Spleen (tissue), 13 donors: ENCODE measurements at regions of chr20 and their contacts with region 1.

Region 1: DNA sequence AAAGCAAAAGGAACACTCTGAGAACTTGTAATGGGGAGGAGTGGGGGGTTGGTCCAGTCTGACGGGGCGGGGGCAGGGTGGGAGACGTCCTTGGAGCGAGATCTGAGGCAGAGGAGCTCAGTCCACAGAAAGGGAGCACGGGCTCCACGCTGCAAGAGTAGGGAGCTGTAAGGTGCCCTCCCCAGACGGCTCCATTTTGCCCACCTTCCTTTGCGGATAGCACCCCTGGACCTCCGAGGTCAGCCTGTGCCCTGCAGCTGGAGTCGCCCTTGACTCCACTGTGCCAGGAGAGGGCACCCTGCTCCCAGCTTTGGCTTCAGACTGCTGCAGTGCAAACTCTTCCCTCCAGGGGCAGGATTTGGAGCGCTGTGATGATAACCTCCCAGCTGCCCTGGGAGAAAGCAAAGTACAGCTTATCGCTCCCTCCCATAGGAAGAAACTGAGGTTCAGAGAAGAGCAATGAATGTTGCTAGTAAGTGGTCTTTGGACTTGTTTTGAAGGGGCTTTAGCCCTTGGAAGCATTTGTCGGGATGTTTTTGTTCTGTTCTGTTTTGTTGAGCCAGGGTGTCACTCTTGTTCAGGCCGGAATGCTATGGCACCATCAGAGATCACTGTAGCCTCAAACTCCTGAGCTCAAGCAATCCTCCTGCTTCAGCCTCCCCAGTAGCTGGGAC is 9.5 kb upstream of the AHCY start:
- DNase-seq: peak; percentile 95
- H3K4me3 ChIP-seq: peak overlapping the region in 4 of 8 donors; percentile 7 to 54 (median 14)
- H3K27ac ChIP-seq: no peak overlapping the region
- H3K4me1 ChIP-seq: peaks cover 9 to 22% (median 19%) of the 10 kb centered on the region in 6 donors
- H3K27me3 ChIP-seq: peaks cover 0 to 22% (median 14%) of the 10 kb centered on the region in 7 donors
- CTCF ChIP-seq: peak; percentile 98 to 100 (median 99)
- POLR2A ChIP-seq: no peak

Region 2: DNA sequence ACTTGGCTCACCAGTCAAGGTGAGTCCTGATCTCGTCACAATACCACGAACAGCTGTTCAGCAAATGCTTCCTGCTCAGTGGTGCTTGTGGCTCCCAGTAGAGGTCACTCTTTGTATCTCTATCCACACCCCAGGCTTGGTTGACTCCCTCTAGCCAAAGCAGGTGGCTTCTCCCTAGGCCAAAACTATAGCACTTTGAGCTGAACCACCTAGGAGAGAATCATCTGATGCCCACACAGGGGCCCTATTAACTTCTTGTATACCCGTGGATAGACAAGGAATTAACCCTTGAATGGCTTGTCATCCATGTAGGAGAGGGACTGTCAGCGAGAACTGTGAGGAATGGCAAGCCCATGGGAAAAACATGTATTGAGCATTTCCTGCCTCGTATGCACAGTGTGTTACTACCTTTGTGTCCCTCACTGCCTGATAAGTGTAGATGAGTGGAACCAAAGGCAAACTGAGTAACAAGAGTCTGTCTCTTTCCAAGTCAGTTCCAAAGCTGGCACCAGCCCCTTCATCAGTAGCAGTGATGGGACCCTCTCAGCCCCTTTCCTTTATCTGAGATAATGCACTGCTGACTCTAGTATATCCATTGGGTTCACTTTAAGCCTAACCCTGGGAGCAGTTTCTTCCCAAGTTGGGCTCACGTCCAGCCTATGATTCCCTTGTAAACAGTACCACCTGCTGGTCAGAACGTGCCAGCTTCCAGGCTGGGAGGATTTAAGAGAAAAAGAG is 243.2 kb before region 1 on chr20:
- intact Hi-C with region 1: no loop called
- DNase-seq: no peak
- H3K4me3 ChIP-seq: no peak overlapping the region
- H3K27ac ChIP-seq: peak overlapping the region in 3 of 8 donors; percentile 5 to 19 (median 8)
- H3K4me1 ChIP-seq: peaks cover 6 to 38% (median 16%) of the 10 kb centered on the region in 6 donors
- H3K27me3 ChIP-seq: no peaks in the 10 kb centered on the region
- CTCF ChIP-seq: peak; percentile 67 to 88 (median 82)
- POLR2A ChIP-seq: no peak

Region 3: GRCh38 chr20:34473262-34473883 is 160.7 kb after region 1 on chr20:
- intact Hi-C with region 1: loop called (anchors 5 kb)
- DNase-seq: no peak
- H3K4me3 ChIP-seq: no peak overlapping the region
- H3K27ac ChIP-seq: no peak overlapping the region
- H3K4me1 ChIP-seq: peaks cover 0 to 20% (median 12%) of the 10 kb centered on the region in 6 donors
- H3K27me3 ChIP-seq: no peaks in the 10 kb centered on the region
- CTCF ChIP-seq: peak in 7 of 11 experiments; percentile 8 to 44 (median 31)
- POLR2A ChIP-seq: no peak

Region 4: DNA sequence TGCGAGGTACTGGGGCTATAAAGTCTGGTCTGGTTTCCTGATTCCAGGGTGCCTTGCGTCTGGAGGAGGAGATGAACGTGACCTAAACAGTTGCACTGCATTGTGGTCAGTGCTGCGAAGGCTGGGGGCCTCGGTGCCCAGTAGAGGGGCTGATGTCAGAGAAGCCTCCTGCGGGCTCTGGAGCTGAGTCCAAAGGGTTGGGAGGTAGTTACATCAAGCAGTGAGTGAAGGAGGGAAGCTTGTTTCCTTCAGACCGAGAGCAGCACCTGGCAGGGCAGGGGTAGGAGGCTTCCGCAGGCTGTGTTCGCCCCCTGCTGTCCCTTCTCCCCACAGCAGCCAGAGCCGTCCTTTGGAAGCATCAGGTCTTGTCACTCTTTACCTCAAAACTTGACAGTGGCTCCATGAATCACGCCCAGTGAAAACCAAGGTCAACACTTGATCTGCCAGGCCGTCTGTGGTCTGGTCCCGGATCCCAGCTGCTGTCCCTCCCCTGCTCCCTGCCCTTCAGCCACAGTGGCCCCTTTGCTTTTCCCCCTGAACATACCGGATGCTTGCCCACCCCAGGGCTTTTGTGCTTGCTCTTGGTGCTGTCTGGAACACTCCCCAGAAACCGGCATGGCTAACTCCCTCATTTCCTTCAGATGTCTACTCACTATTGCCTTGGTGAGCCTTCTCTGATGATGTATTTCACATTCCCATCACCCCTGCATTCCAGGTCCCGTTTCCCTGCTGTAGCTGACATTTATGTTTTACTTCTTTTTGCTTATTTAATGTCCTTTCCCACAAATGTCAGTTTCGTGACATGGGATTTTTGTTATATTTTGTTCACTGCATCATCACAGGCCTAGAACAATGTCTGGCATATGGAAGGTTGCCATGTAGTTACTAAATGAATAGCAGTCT is 210.5 kb after region 1 on chr20:
- intact Hi-C with region 1: loop called (anchors 5 kb)
- DNase-seq: no peak
- H3K4me3 ChIP-seq: no peak overlapping the region
- H3K27ac ChIP-seq: peak overlapping the region in 3 of 8 donors; percentile 15 to 43 (median 34)
- H3K4me1 ChIP-seq: peaks cover 16 to 84% (median 54%) of the 10 kb centered on the region in 6 donors
- H3K27me3 ChIP-seq: no peaks in the 10 kb centered on the region
- CTCF ChIP-seq: peak in 8 of 11 experiments; percentile 41 to 57 (median 48)
- POLR2A ChIP-seq: no peak

Region 5: DNA sequence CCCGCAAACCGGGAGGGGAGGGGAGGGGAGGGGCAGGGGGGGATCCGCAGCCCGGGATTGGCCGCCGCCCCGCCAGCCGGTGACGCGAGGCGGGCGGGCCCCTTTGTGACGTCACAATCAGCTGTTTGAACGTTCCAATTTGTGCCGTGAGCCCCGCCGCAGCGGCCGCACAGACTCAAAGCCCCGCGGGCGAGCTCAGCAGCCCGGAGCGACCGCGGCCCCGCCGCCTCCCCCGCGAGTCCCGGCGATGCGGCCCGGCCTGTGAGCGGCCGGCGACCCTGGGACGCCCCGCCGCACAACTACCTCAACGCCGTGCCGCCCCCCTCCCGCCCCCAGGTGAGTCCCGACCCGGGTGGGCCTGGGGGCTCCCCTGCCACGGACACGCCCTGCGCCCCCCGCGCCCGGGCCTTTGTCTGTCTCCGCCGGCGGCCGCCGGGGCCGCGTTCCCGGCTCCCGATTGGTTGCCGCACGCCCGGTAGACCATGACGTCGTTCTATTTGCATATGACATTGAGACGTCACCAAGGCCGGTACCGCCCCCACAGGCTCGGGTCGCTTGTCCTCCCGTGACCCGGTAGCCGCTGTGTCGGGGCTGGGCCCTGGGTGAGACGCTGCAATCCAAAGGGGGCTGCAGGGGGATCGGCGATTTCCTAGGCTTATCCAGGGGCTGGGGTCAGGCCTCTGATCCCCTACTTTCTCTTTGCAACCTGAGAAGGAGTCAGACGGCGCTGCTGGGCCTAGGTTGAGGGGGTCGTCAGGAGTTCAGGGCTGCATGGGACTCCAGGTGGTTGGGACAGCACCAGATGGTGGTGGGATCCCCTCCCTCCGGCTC is 391.7 kb after region 1 on chr20 and contains the start of gene TP53INP2:
- intact Hi-C with region 1: loop called (anchors 5 kb)
- DNase-seq: peak; percentile 95
- H3K4me3 ChIP-seq: peak within 1 kb of the TSS; percentile 63 to 79 (median 71)
- H3K27ac ChIP-seq: peak within 1 kb of the TSS; percentile 82 to 100 (median 99)
- H3K4me1 ChIP-seq: peaks cover 7 to 62% (median 39%) of the 10 kb centered on the region in 6 donors
- H3K27me3 ChIP-seq: no peaks in the 10 kb centered on the region
- CTCF ChIP-seq: peak in 4 of 11 experiments; percentile 10 to 29 (median 22)
- POLR2A ChIP-seq: peak in 1 of 3 donors; percentile 35
- total RNA-seq, gene TP53INP2: 4.8 to 10.6 (median 7.4) TPM

Region 6: GRCh38 chr20:34768096-34768495 is 455.4 kb after region 1 on chr20:
- intact Hi-C with region 1: loop called (anchors 10 kb)
- DNase-seq: no peak
- H3K4me3 ChIP-seq: no peak overlapping the region
- H3K27ac ChIP-seq: no peak overlapping the region
- H3K4me1 ChIP-seq: peaks cover 0 to 25% (median 0%) of the 10 kb centered on the region in 6 donors
- H3K27me3 ChIP-seq: no peaks in the 10 kb centered on the region
- CTCF ChIP-seq: no peak
- POLR2A ChIP-seq: no peak